ENCODE measurements at regions of chr11 and their contacts with region 1.

Region 1: GRCh38 chr11:64723117-64723906 is at the start of gene NRXN2:
- DNase-seq: peak; percentile 87 to 92
- ATAC-seq: peak; percentile 95 to 99 (median 97)
- H3K4me3 ChIP-seq: peak within 1 kb of the TSS; percentile 83
- H3K27ac ChIP-seq: no peak within 1 kb of the TSS
- H3K4me1 ChIP-seq: peaks cover 5% of the 10 kb centered on the region
- H3K27me3 ChIP-seq: peaks cover 0 to 12% (median 10%) of the 10 kb centered on the region in 3 donors
- CTCF ChIP-seq: peak; percentile 90
- total RNA-seq, gene NRXN2: 1.4 to 5.2 (median 3.5) TPM

Region 2: GRCh38 chr11:64448599-64449556 is 274.4 kb before region 1 on chr11:
- intact Hi-C with region 1: loop called in 1 of 2 experiments (anchors 10 kb)
- DNase-seq: peak; percentile 81 to 91
- ATAC-seq: peak; percentile 91 to 99 (median 94)
- H3K4me3 ChIP-seq: peak overlapping the region; percentile 57
- H3K27ac ChIP-seq: peak overlapping the region; percentile 65
- H3K4me1 ChIP-seq: peaks cover 17% of the 10 kb centered on the region
- H3K27me3 ChIP-seq: peaks cover 0 to 7% (median 0%) of the 10 kb centered on the region in 3 donors
- CTCF ChIP-seq: peak; percentile 78

Region 3: DNA sequence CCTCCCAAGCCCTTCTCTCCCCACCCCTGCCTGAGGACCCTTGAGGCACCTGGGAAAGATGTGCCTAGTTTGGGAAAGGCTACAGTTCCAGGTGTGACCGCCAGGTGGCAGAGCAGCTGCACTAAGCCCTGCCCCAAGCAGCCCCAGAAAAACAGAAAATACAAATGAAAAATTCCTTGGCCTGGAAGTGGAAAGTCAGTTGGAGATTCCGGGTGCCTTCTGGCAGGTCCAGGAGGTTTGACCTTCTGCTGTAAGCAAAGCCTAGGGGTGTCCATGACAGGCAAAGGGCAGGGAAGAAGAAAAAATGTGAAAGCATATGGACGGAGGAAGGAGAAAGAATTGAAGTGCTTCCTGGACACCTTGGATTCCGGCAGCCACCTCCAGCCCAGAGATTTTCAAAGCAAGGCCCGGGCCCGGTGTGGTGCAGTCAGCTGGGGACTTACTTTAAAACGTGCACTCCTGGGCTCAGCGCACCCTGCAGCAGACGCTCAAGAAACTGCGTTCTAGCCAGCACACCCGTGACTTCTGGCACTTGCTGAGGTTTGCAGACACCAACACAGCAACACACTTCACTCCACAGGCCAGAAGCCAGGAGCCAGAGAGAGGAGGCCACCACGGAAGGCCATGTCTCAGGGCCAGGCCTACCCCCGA is 169.6 kb before region 1 on chr11:
- intact Hi-C with region 1: loop called (anchors 5 kb)
- DNase-seq: peak; percentile 55 to 81
- ATAC-seq: peak; percentile 67 to 88 (median 76)
- H3K4me3 ChIP-seq: no peak overlapping the region
- H3K27ac ChIP-seq: no peak overlapping the region
- H3K4me1 ChIP-seq: peaks cover 7% of the 10 kb centered on the region
- H3K27me3 ChIP-seq: no peaks in the 10 kb centered on the region
- CTCF ChIP-seq: peak; percentile 99

Region 4: GRCh38 chr11:64652586-64653387 is 70.5 kb before region 1 on chr11:
- intact Hi-C with region 1: loop called in 1 of 2 experiments (anchors 2 kb)
- DNase-seq: peak; percentile 74 to 87
- ATAC-seq: peak; percentile 74 to 89 (median 82)
- H3K4me3 ChIP-seq: no peak overlapping the region
- H3K27ac ChIP-seq: no peak overlapping the region
- H3K4me1 ChIP-seq: no peaks in the 10 kb centered on the region
- H3K27me3 ChIP-seq: peaks cover 0 to 7% (median 4%) of the 10 kb centered on the region in 3 donors
- CTCF ChIP-seq: peak; percentile 80

Region 5: DNA sequence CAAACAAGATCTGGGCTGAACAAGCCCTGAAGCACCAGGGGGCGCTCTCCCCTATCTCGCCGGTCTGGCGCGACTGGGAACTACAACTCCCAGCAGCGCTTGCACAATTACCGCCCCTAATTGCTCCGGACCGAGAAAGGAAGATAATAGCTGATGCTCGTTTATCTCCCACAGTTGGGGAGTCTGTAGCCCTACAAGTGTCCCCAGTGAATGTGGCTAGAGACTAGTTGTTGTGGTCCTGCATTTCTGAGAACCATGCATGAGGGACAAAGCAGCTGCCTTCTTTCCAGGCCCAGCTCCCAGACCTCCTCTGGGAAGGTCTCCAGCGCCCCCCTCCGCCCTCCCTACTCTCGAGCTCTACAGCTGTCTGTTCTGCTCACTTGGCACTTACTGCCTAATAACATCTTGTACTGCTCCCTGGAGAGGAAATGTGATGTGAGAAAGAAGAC is 34.8 kb before region 1 on chr11:
- intact Hi-C with region 1: loop called (anchors 5 kb)
- DNase-seq: peak; percentile 91 to 95
- ATAC-seq: peak; percentile 91 to 94 (median 92)
- H3K4me3 ChIP-seq: peak overlapping the region; percentile 63
- H3K27ac ChIP-seq: peak overlapping the region; percentile 71
- H3K4me1 ChIP-seq: peaks cover 18% of the 10 kb centered on the region
- H3K27me3 ChIP-seq: no peaks in the 10 kb centered on the region
- CTCF ChIP-seq: peak; percentile 91

Region 6: DNA sequence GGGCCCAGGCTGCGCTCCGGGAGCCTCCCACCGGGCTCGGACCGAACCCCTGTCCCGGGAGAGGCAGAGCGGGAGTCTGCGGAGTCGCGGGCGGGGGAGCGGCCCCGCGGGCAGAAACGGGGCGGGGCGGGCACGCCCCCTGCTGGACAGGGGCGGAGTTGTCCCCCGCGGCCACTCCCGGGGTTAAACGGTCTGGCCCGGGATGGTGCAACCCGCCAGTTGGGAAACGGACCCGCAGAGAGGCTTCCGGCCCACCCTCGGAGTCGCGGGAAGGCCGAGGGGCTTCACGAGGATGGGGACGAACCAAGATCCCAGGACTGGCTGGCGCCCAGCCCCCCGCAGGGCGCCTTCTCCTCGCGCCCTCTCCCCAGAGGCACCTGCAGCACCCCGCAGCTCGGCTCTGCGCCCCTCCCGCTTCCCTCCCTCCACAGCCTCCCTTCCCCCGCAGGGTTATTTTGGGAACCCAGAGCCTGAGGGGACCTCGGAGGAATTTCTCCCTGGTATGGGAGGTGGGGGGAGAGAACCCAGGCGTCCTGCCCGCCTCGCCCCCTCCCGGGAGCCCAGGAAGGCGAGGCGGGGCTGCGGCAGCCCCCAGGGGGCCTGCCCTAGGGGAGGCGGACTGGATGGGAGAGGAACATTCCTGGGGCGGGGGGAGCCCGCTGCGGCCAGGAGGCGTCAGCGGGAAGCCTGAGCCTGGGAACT is 19.7 kb after region 1 on chr11:
- intact Hi-C with region 1: no loop called
- DNase-seq: peak; percentile 87 to 93
- ATAC-seq: peak; percentile 61 to 79 (median 74)
- H3K4me3 ChIP-seq: peak overlapping the region; percentile 76
- H3K27ac ChIP-seq: peak overlapping the region; percentile 82
- H3K4me1 ChIP-seq: peaks cover 44% of the 10 kb centered on the region
- H3K27me3 ChIP-seq: no peaks in the 10 kb centered on the region
- CTCF ChIP-seq: peak; percentile 91

Region 7: GRCh38 chr11:64905516-64906313 is 182.4 kb after region 1 on chr11:
- intact Hi-C with region 1: no loop called
- DNase-seq: no peak
- ATAC-seq: no peak
- H3K4me3 ChIP-seq: no peak overlapping the region
- H3K27ac ChIP-seq: no peak overlapping the region
- H3K4me1 ChIP-seq: no peaks in the 10 kb centered on the region
- H3K27me3 ChIP-seq: no peaks in the 10 kb centered on the region
- CTCF ChIP-seq: no peak

Measured in psoas muscle (tissue), 8 donors.